A673 (cell line): ENCODE measurements at regions of chr22 and their contacts with region 1.

Region 1: GRCh38 chr22:30289134-30289979 is at the start of gene CASTOR1:
- DNase-seq: peak; percentile 98
- H3K4me3 ChIP-seq: peak within 1 kb of the TSS; percentile 74
- H3K27ac ChIP-seq: peak within 1 kb of the TSS; percentile 56
- H3K4me1 ChIP-seq: peaks cover 26% of the 10 kb centered on the region
- H3K27me3 ChIP-seq: no peaks in the 10 kb centered on the region
- CTCF ChIP-seq: no peak
- total RNA-seq, gene CASTOR1: 2.0 and 5.5 TPM in 2 replicates

Region 2: GRCh38 chr22:30104501-30105156 is 184.7 kb before region 1 on chr22:
- CTCF ChIA-PET with region 1: interaction called, 4 read pairs
- POLR2A ChIA-PET with region 1: no interaction called
- intact Hi-C with region 1: loop called (anchors 2 kb)
- DNase-seq: no peak
- H3K4me3 ChIP-seq: no peak overlapping the region
- H3K27ac ChIP-seq: no peak overlapping the region
- H3K4me1 ChIP-seq: no peaks in the 10 kb centered on the region
- H3K27me3 ChIP-seq: no peaks in the 10 kb centered on the region
- CTCF ChIP-seq: no peak

Region 3: DNA sequence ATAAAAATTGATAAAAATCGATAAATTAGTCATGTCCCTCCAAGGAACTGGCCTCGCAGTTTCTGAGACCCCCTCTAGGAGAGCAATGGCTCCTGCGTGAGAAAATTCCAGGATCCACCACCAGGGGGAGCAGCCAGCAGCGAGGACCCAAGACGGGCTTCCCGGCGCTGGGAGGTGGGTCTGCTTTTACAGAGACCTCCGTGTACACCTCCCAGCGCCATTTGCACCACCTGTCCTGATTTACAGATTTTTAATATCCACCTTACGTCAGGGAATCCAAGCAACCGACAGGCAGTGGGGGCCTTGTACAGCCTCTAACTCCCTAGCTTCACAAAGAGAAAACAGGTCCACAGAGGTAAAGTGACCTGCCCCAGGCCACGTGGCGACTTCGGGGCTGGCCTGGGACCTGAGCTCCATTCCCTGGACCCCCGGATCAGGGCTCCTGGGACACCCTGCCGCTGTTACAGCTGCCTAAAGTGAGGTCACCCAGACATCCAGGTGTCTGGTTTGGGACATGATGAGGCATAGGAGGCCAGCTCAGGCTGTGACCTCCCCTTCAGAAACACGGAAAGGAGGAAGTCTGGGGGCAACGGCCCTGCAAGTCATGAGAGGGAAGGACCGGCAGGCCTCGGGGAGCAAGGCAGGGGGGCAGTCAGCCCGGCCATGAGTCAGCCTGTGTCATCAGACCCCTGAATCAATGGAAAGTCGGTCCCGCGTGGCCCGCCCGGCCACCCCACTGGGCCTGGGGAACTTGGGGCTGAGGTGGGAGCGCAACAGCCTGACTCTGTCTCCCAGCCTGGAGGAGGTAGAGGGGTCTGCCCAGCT is 26.2 kb before region 1 on chr22:
- CTCF ChIA-PET with region 1: no interaction called
- POLR2A ChIA-PET with region 1: no interaction called
- intact Hi-C with region 1: loop called (anchors 1 kb)
- DNase-seq: peak; percentile 79
- H3K4me3 ChIP-seq: no peak overlapping the region
- H3K27ac ChIP-seq: no peak overlapping the region
- H3K4me1 ChIP-seq: no peaks in the 10 kb centered on the region
- H3K27me3 ChIP-seq: no peaks in the 10 kb centered on the region
- CTCF ChIP-seq: peak; percentile 94

Region 4: DNA sequence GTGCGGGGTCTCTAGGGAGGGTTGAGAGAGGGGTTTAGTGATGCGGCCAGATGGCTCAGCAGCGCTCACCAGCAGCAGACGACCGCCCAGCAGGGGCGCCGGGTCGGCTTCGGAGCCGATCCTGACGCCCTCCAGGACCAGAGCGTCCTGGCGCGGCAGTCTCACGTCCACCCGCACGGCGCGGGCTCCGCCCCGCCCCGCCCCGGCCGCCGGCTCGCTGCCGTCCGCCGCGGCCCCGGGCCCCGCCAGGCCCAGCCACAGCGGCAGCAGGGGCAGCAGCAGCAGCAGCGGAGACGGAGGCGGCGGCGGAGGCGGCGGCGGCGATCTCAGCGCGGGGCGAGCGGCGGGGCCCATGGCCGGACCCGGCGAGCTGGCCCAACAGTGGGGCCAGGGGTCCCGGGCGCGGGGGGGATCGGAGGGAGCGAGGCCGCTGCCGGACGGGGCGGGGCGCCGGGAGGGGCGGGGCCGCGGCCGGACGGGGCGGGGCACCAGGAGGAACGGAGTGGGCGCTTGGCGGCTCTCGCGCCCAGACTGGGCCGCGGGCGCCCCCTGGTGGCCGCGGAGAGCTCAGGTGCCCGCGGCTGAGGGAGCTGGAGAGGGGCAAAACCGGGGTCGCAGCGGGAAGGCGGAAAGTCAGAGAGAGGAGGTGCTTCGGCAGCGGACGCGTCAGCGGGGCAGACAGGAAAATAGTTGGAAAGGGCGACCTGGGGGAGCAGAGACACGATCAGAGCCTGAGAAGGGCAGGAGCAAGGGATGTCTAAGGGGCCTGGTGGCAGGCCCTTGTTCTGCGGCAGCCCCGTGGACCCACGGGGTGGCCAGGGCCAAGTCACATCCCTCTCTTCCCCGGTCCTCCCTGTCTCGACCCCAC is 97.8 kb after region 1 on chr22 and contains the start of gene RNF215:
- CTCF ChIA-PET with region 1: interaction called, 11 read pairs
- POLR2A ChIA-PET with region 1: interaction called, 7 read pairs
- intact Hi-C with region 1: loop called (anchors 1 kb)
- DNase-seq: peak; percentile 89
- H3K4me3 ChIP-seq: peak within 1 kb of the TSS; percentile 58
- H3K27ac ChIP-seq: peak within 1 kb of the TSS; percentile 54
- H3K4me1 ChIP-seq: peaks cover 4% of the 10 kb centered on the region
- H3K27me3 ChIP-seq: no peaks in the 10 kb centered on the region
- CTCF ChIP-seq: peak; percentile 88
- total RNA-seq, gene RNF215: 18.9 and 22.4 TPM in 2 replicates

Region 5: DNA sequence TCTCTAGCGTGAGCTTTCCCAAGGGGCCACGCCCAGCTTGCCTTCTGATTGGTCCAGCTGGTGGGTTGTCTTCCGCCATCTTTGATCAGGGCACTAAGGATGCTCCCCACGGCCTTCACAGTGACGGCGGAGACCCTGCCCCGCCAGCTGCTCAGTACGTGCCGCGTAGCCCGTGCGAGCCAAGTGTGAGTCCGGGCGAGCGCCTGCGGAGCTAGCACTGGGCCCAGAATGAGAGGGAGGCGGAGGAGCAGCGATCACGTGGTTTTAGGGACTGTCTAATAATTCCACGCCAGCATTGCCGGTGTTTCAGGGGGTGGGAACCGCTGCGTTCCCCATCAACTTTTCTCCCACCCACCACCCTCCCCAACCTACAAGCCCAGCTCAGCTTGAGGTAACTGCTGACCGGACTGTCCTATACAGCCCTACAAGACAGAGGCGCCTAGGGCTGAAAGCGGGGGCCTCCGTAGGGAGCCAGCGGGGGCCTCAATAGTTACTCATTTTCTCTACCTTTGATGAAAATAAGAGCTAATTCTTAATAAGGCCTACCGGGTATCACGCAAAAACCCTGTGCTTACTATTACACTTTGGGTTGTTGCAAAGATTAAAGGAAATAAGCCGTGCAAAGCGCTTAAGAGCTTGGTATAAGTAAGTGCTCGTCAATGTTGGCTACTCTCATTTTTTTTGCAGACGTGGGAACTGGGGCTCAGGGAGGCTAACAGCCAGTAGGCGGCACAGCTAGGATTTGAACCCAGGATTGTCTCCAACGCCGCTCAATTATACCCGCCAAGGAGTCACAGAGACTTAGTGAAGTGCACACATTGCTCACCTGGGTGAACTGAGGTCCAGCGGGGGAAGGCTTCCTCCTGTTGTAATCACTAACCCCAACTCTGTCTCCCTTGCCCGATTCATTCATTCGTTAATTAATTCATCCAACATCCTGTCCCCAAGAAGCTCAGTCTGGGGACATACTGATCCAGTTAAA is 134.9 kb after region 1 on chr22:
- CTCF ChIA-PET with region 1: interaction called, 6 read pairs
- POLR2A ChIA-PET with region 1: no interaction called
- intact Hi-C with region 1: loop called (anchors 5 kb)
- DNase-seq: peak; percentile 100
- H3K4me3 ChIP-seq: peak overlapping the region; percentile 60
- H3K27ac ChIP-seq: peak overlapping the region; percentile 97
- H3K4me1 ChIP-seq: peaks cover 50% of the 10 kb centered on the region
- H3K27me3 ChIP-seq: no peaks in the 10 kb centered on the region
- CTCF ChIP-seq: no peak

Region 6: DNA sequence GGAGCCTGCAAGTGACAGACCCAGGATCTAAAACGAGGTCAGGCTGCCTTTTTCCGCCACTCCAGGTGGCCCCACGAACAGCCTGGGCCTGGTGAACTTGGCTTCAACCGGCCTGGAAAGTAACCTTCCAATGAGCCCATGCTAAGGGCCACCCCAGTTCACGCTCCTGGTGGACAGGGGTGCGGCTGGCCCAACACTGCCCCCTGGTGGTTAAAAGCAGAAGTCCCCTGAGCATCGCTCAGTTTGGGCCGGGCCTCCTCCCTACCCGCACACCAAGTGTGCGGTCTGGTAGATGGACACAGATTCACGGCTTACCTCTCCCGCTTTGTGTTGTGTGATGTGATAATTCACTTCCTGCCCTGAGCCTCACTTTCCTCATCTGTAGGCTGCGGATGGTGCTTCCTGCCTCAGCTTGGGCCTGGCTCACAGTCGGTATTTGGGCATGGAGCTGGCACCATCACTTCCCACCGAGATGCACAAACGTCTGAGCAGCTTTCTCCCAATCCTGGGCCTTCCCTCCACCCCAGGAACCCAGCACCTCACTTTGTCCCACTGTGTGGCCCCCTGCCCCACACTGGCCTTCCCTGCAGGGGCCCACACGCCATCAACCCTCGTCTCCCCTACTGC is 196.1 kb after region 1 on chr22:
- CTCF ChIA-PET with region 1: no interaction called
- POLR2A ChIA-PET with region 1: no interaction called
- intact Hi-C with region 1: loop called (anchors 5 kb)
- DNase-seq: peak; percentile 61
- H3K4me3 ChIP-seq: no peak overlapping the region
- H3K27ac ChIP-seq: no peak overlapping the region
- H3K4me1 ChIP-seq: no peaks in the 10 kb centered on the region
- H3K27me3 ChIP-seq: no peaks in the 10 kb centered on the region
- CTCF ChIP-seq: peak; percentile 97

Region 7: GRCh38 chr22:30606455-30607299 is 317.3 kb after region 1 on chr22 and contains the start of gene TCN2:
- CTCF ChIA-PET with region 1: no interaction called
- POLR2A ChIA-PET with region 1: no interaction called
- intact Hi-C with region 1: loop called (anchors 10 kb)
- DNase-seq: peak; percentile 67
- H3K4me3 ChIP-seq: peak within 1 kb of the TSS; percentile 57
- H3K27ac ChIP-seq: peak within 1 kb of the TSS; percentile 56
- H3K4me1 ChIP-seq: peaks cover 18% of the 10 kb centered on the region
- H3K27me3 ChIP-seq: no peaks in the 10 kb centered on the region
- CTCF ChIP-seq: no peak
- total RNA-seq, gene TCN2: 7.3 and 9.8 TPM in 2 replicates